ENCODE measurements at regions of chr2 and their contacts with region 1.

Region 1: DNA sequence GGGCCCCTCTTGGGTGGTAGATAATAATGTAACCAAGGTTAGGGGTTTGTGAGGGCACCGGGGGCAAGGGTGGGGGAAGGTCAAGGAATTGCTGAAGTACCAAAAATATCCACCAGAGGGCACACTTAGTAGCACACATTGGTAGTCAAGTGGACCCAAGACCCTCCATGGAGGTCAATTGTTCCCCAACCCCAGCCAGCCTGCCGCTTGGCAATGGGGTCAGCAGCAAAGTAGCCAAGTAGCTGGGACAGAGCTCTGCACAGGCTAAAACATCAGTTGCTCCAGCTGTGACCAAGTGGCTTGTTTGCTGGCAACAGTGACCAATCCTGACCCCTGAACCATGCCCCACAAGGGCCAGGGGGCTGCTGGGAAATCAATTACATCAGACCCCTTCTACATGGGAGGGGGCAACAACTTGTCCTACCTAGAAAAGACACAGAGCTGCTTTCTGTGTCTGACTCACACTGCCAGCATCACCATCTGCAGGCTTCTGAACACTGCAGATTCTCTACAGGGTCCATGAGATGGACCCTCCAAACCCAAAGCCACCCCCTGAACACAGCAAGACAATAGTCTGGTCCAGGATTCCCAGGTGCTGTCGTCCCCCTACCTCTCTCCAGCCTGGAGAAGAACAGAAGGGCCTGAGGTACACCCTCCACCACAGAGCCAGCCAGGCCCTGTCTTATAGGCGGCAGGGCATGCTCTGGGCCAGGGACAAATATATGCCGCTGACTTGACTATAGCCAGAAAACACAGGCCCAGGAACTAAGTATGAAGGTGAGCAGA is 76.0 kb downstream of the EMX1 start:
- DNase-seq: no peak
- ATAC-seq: no peak

Region 2: DNA sequence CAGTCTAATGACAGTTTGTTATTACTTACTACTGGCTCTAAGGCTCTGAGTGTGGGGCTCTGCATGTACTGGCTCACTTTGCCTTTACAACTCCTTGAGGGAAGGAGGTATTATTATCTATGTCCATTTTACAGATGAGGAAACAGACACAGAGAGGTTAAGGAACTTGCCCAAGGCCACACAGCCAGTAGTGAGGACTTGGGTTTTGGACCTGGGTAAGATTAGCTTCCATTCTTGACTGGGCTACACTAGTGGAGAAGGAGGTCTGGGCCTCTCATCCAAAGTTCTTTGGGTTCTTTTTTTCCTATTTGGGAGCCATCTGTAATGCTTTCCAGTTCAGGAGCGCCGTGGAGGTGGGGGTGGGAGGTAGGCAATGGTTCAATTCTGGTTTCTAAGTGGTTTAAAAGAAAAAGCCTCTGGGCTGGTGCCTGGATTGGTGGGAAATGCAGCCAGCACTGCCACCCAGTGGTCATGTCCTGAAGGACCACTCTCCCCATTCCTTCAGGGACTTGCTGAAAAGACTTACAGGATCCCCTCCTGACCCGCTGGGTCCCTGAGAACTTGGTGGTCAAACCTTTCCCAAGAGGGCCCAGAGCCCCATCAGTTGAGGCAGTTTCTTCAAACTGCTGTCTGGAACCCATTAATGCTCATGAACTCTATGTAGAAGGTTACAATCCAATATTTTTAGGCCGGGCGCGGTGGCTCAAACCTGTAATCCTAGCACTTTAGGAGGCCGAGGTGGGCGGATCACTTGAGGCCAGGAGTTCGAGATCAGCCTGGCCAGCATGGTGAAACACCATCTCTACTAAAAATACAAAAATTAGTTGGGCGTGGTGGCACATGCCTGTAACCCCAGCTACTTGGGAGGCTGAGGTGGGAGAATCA is 170.4 kb after region 1 on chr2:
- intact Hi-C with region 1: loop called (anchors 5 kb)
- DNase-seq: peak; percentile 59
- ATAC-seq: peak; percentile 76

Region 3: GRCh38 chr2:73176881-73177644 is 183.7 kb after region 1 on chr2:
- intact Hi-C with region 1: loop called (anchors 5 kb)
- DNase-seq: peak; percentile 97
- ATAC-seq: peak; percentile 96

Region 4: DNA sequence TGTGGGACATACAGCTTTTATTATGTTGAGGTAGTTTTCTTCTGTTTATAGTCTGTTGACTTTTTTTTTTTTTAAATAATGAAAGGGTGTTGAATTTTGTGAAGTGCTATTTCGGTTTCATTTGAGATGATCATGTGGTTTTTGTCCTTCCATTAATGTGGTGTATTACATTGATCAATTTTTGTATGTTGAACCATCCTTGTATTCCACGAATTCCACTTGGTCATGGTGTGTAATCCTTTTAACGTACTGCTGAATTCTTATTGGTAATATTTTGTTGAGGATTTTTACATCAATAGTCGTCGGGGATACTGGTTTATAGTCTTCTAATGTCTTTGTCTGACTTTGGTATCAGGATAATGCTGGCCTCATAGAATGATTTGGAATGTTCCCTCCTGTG is 411.1 kb after region 1 on chr2:
- intact Hi-C with region 1: no loop called
- DNase-seq: no peak
- ATAC-seq: no peak

Measured in Right ventricle myocardium inferior (tissue), 1 donor.